ENCODE measurements at regions of chr11 and their contacts with region 1.

Region 1: GRCh38 chr11:59197991-59198390 is 14.7 kb downstream of the MPEG1 start:
- DNase-seq: peak; percentile 89
- H3K4me3 ChIP-seq: no peak overlapping the region
- H3K27ac ChIP-seq: no peak overlapping the region
- H3K4me1 ChIP-seq: peaks cover 38% of the 10 kb centered on the region
- H3K27me3 ChIP-seq: no peaks in the 10 kb centered on the region
- CTCF ChIP-seq: no peak

Region 2: DNA sequence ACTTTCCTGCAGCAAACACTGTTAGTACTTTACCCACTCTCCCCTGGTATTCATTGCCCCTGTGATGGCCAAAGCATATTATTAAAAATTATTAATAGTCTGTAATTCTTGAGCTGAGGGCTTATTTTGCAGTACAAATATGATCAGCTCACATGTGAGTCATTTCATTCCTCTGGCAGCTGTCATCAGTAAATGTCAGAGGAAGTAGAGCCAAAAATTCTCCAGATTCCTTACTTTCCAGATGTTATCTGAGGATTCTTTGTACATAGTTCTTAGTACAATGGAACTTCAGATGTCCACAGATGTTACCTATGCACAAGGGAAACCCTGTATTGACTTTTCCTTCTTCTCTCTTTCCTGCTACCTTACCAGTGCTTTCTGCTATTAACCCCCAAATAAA is 803.8 kb before region 1 on chr11:
- CTCF ChIA-PET with region 1: no interaction called
- POLR2A ChIA-PET with region 1: no interaction called
- intact Hi-C with region 1: no loop called
- DNase-seq: peak; percentile 14
- H3K4me3 ChIP-seq: no peak overlapping the region
- H3K27ac ChIP-seq: no peak overlapping the region
- H3K4me1 ChIP-seq: no peaks in the 10 kb centered on the region
- H3K27me3 ChIP-seq: no peaks in the 10 kb centered on the region
- CTCF ChIP-seq: no peak

Region 3: DNA sequence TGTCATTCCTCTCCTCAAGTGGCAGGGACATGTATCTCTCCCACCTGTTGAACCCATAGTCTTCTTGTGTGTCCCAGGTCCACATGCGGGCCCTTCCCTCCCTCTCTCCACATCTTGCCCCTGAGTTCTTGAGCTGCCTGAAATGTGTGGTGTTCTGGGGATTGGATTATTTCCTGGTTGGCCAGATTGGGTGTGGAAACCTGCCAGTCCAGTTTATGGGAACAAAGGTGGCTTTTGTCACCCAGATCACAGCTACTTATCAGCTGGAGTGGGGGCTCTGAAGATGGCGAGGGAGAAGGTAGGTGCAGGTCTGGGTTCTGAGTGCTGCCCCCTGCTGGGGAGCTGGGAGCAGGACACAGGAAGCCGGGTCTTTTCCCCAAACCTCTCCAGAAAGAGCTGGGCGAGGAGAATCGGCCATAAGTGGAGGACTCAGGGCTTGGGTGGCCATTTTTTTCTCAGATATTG is 11.8 kb before region 1 on chr11:
- CTCF ChIA-PET with region 1: interaction called, 10 read pairs
- POLR2A ChIA-PET with region 1: no interaction called
- intact Hi-C with region 1: no loop called
- DNase-seq: peak; percentile 66
- H3K4me3 ChIP-seq: no peak overlapping the region
- H3K27ac ChIP-seq: no peak overlapping the region
- H3K4me1 ChIP-seq: no peaks in the 10 kb centered on the region
- H3K27me3 ChIP-seq: no peaks in the 10 kb centered on the region
- CTCF ChIP-seq: peak; percentile 91